CD8-positive, alpha-beta memory T cell (primary cell): ENCODE measurements at regions of chr16 and their contacts with region 1.

Region 1: GRCh38 chr16:89721546-89722391 is 432 bp downstream of the ZNF276 start:
- DNase-seq: peak; percentile 88 to 94 (median 93)
- H3K4me3 ChIP-seq: peak overlapping the region; percentile 98
- H3K4me3 Mint-ChIP-seq: peak overlapping the region; percentile 91 to 99 (median 97)
- H3K27ac ChIP-seq: peak overlapping the region; percentile 92
- H3K27ac Mint-ChIP-seq: peak overlapping the region; percentile 98 to 100 (median 99)
- H3K4me1 ChIP-seq: peaks cover 41% of the 10 kb centered on the region
- H3K4me1 Mint-ChIP-seq: peaks cover 17 to 38% (median 28%) of the 10 kb centered on the region in 3 donors
- H3K27me3 ChIP-seq: no peaks in the 10 kb centered on the region
- H3K27me3 Mint-ChIP-seq: peaks cover 0 to 6% of the 10 kb centered on the region in 2 donors

Region 2: DNA sequence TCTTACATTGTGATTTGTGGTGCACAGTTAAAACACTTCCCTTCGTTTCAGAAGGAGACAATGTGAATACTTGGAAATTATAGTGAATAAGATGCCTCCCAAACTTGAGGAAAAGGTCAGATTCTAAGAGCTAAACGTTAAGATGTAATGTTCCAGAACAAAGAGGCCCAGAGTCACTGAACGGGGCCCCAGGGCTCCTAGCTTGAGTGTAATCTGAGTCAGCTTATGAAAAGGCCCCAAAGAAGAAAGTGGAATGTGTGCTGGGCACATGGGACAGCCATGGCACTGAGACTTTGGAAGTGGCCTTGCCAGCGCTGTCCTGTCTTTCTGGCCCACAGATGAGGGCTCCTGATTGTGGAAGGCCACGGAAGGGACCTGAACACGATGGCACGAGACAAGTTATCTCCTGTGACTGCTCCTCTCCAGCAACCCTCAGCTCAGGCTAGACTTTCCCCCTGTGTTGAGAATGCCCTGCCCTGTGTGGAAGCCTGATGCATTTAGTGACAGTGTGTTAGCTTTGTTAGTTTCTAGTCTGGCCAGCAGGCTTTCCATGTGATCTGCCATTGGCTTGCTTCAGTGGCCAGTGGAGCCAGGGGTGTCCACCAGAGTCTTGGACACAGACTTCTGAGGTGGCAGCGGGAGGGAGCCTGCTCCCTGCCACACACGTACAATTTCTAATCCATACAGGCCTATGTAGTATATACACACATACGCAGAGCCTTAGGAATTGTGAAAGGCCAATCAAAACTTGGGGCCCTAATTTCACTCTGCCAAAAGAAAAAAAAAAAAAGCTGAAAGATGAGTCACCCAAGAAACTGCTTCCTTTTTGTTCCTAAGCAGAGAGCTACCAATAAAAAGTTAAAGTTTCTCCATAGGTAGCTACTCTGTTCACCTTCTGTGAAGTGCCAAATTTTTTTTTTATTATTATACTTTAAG is 51.0 kb before region 1 on chr16:
- CTCF ChIA-PET with region 1: no interaction called
- POLR2A ChIA-PET with region 1: no interaction called
- DNase-seq: no peak
- H3K4me3 ChIP-seq: no peak overlapping the region
- H3K4me3 Mint-ChIP-seq: no peak overlapping the region
- H3K27ac ChIP-seq: no peak overlapping the region
- H3K27ac Mint-ChIP-seq: no peak overlapping the region
- H3K4me1 ChIP-seq: peaks cover 5% of the 10 kb centered on the region
- H3K4me1 Mint-ChIP-seq: no peaks in the 10 kb centered on the region
- H3K27me3 ChIP-seq: no peaks in the 10 kb centered on the region
- H3K27me3 Mint-ChIP-seq: no peaks in the 10 kb centered on the region

Region 3: DNA sequence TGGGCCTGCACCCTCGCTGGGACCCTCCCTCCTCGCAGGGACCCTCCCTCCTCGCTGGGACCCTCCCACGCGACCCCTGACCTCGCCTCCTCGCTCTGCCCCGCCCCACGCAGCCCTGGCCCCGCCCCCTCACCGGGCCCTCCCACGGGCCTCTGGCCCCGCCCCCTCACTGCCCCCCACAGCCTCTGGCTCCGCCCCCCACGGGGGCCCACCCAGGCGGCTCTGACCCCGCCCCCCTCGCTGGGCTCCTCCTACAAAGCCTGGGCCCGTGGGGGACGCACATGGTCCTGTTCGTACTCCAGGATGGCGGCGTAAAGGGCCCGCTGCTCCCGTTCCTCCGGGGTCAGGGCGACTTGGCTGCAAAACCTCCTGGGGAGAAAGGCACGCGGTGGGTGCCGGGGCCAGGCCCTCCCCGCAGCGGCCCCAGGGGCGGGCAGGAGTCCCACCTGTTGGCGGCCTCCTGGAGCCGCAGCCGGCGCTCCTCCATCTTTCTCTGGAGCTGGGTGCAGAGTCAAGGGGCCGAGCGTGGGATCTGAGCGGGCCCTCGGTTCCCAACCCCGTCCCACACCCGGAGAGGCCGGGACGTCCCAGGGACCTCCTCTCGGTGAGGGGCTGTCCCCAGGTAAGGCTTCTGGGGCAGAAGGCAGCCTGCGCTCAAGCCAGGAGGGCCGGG is 10.0 kb before region 1 on chr16:
- CTCF ChIA-PET with region 1: interaction called, 46 read pairs
- POLR2A ChIA-PET with region 1: interaction called, 24 read pairs
- DNase-seq: peak; percentile 59 to 81 (median 76)
- H3K4me3 ChIP-seq: peak overlapping the region; percentile 43
- H3K4me3 Mint-ChIP-seq: peak overlapping the region in 4 of 7 donors; percentile 19 to 65 (median 52)
- H3K27ac ChIP-seq: peak overlapping the region; percentile 43
- H3K27ac Mint-ChIP-seq: peak overlapping the region in 1 of 8 donors; percentile 50
- H3K4me1 ChIP-seq: peaks cover 10% of the 10 kb centered on the region
- H3K4me1 Mint-ChIP-seq: peaks cover 0 to 9% (median 7%) of the 10 kb centered on the region in 3 donors
- H3K27me3 ChIP-seq: no peaks in the 10 kb centered on the region
- H3K27me3 Mint-ChIP-seq: no peaks in the 10 kb centered on the region

Region 4: DNA sequence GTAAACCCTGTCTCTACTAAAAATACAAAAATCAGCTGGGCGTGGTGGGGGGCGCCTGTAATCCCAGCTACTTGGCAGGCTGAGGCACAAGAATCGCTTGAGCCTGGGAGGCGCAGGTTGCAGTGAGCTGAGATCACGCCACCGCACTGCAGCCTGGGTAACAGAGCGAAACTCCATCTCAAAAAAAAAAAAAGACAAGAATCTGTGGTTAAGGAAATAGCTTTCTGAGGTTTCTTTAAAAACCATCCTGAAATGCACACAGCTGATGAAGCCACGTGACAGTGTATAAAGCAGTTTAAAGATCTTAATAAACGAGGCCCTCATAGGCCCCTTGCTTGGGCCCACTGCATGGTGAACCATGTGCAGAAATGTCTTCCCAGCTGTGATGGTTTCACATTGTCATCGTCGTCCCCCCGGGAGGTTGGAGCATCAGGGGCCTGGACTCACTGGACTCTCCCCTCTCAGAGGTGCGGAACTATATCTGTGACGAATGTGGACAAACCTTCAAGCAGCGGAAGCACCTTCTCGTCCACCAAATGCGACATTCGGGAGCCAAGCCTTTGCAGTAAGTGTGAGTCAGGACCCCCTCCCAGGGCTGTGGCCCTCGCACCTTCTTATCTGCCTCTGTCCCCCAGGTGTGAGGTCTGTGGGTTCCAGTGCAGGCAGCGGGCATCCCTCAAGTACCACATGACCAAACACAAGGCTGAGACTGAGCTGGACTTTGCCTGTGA is 15.7 kb after region 1 on chr16:
- CTCF ChIA-PET with region 1: interaction called, 17 read pairs
- POLR2A ChIA-PET with region 1: interaction called, 68 read pairs
- DNase-seq: peak; percentile 24 to 73 (median 71)
- H3K4me3 ChIP-seq: no peak overlapping the region
- H3K4me3 Mint-ChIP-seq: peak overlapping the region; percentile 19 to 80 (median 63)
- H3K27ac ChIP-seq: no peak overlapping the region
- H3K27ac Mint-ChIP-seq: peak overlapping the region; percentile 23 to 94 (median 78)
- H3K4me1 ChIP-seq: peaks cover 40% of the 10 kb centered on the region
- H3K4me1 Mint-ChIP-seq: peaks cover 41 to 71% (median 51%) of the 10 kb centered on the region in 3 donors
- H3K27me3 ChIP-seq: no peaks in the 10 kb centered on the region
- H3K27me3 Mint-ChIP-seq: no peaks in the 10 kb centered on the region

Region 5: GRCh38 chr16:89761304-89761922 is 39.6 kb after region 1 on chr16:
- CTCF ChIA-PET with region 1: interaction called, 3 read pairs
- POLR2A ChIA-PET with region 1: interaction called, 16 read pairs
- DNase-seq: peak in 1 of 5 donors; percentile 41
- H3K4me3 ChIP-seq: peak overlapping the region; percentile 52
- H3K4me3 Mint-ChIP-seq: peak overlapping the region; percentile 85 to 94 (median 90)
- H3K27ac ChIP-seq: peak overlapping the region; percentile 32
- H3K27ac Mint-ChIP-seq: peak overlapping the region; percentile 92 to 99 (median 96)
- H3K4me1 ChIP-seq: peaks cover 31% of the 10 kb centered on the region
- H3K4me1 Mint-ChIP-seq: peaks cover 37 to 66% (median 53%) of the 10 kb centered on the region in 3 donors
- H3K27me3 ChIP-seq: no peaks in the 10 kb centered on the region
- H3K27me3 Mint-ChIP-seq: no peaks in the 10 kb centered on the region

Region 6: DNA sequence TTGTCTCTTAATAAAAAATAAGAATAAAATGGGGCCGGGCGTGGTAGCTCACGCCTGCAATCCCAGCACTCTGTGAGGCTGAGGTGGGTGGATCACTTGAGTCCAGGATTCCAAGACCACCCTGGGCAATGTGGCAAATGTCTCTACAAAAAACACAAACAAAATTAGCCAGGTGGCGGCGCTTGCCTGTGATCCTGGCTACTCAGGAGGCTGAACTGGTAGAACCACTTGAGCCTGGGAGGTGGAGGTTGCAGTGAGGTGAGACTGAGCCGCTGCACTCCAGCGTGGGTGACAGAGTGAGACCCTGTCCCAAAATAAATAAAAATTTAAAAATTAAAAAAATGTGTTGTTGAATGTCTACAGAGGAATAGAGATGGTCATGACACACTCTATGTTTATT is 223.9 kb after region 1 on chr16:
- CTCF ChIA-PET with region 1: no interaction called
- POLR2A ChIA-PET with region 1: no interaction called
- DNase-seq: no peak
- H3K4me3 ChIP-seq: no peak overlapping the region
- H3K4me3 Mint-ChIP-seq: no peak overlapping the region
- H3K27ac ChIP-seq: no peak overlapping the region
- H3K27ac Mint-ChIP-seq: no peak overlapping the region
- H3K4me1 ChIP-seq: peaks cover 14% of the 10 kb centered on the region
- H3K4me1 Mint-ChIP-seq: peaks cover 8 to 17% (median 13%) of the 10 kb centered on the region in 3 donors
- H3K27me3 ChIP-seq: peaks cover 4% of the 10 kb centered on the region
- H3K27me3 Mint-ChIP-seq: peaks cover 24 to 38% of the 10 kb centered on the region in 2 donors